ENCODE measurements at regions of chr1 and their contacts with region 1.

Region 1: GRCh38 chr1:211323156-211324063 is 3.2 kb upstream of the TRAF5 start:
- DNase-seq: peak; percentile 78
- H3K4me3 Mint-ChIP-seq: no peak overlapping the region
- H3K27ac Mint-ChIP-seq: peak overlapping the region; percentile 68
- H3K4me1 Mint-ChIP-seq: peaks cover 55% of the 10 kb centered on the region
- H3K27me3 Mint-ChIP-seq: no peaks in the 10 kb centered on the region

Region 2: DNA sequence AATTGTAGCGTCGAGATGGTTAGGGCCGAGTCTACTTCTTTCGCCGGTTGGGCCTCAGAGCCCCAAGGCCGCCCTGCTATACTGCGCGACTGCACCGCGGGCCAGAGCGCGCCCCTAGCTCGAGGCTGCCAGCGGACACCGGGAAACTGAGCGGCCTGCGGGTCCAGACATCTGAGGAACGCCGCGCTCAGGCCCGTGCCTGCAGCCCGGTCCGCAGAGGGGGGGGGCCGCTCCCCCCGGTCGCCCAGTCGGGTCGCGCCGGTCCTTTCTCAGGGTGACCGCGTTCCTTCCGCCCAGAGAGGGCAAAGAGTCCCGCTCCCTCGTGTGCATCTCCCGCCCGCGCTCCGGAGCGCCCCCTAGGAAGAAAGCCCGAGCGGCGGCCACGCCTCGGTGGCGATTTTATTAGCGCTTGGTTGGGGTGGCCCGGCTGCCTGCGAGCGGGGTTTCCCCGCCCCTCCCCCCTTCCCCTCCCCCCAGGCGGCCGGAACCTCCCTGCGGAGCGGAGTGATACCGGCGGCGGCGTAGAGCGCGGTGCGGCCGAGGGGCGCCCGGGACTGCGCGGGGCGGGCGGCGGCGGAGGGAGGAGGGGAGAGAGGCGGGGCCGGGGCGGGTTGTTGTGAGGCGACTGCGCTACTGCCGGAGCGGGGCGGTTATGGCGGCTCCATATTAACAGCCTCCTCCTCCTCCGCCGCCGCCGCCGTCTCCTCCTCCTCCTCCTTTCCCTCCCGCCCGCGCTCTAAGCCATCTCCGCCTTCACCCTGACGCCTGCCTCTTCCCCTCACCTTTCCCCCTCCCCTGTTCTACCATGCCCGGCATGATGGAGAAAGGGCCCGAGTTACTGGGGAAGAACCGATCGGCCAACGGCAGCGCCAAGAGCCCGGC is 64.4 kb before region 1 on chr1 and contains the start of gene RCOR3:
- CTCF ChIA-PET with region 1: interaction called, 4 read pairs
- POLR2A ChIA-PET with region 1: interaction called, 4 read pairs
- intact Hi-C with region 1: loop called (anchors 1 kb)
- DNase-seq: peak; percentile 95
- H3K4me3 Mint-ChIP-seq: peak within 1 kb of the TSS; percentile 83
- H3K27ac Mint-ChIP-seq: peak within 1 kb of the TSS; percentile 93
- H3K4me1 Mint-ChIP-seq: peaks cover 16% of the 10 kb centered on the region
- H3K27me3 Mint-ChIP-seq: no peaks in the 10 kb centered on the region
- total RNA-seq, gene RCOR3: 30.2 to 32.7 TPM

Region 3: GRCh38 chr1:211335522-211336157 is 12.2 kb after region 1 on chr1:
- CTCF ChIA-PET with region 1: interaction called, 36 read pairs
- POLR2A ChIA-PET with region 1: interaction called, 6 read pairs
- intact Hi-C with region 1: loop called (anchors 1 kb)
- DNase-seq: peak; percentile 38
- H3K4me3 Mint-ChIP-seq: peak overlapping the region; percentile 48
- H3K27ac Mint-ChIP-seq: peak overlapping the region; percentile 86
- H3K4me1 Mint-ChIP-seq: peaks cover 82% of the 10 kb centered on the region
- H3K27me3 Mint-ChIP-seq: no peaks in the 10 kb centered on the region

Region 4: DNA sequence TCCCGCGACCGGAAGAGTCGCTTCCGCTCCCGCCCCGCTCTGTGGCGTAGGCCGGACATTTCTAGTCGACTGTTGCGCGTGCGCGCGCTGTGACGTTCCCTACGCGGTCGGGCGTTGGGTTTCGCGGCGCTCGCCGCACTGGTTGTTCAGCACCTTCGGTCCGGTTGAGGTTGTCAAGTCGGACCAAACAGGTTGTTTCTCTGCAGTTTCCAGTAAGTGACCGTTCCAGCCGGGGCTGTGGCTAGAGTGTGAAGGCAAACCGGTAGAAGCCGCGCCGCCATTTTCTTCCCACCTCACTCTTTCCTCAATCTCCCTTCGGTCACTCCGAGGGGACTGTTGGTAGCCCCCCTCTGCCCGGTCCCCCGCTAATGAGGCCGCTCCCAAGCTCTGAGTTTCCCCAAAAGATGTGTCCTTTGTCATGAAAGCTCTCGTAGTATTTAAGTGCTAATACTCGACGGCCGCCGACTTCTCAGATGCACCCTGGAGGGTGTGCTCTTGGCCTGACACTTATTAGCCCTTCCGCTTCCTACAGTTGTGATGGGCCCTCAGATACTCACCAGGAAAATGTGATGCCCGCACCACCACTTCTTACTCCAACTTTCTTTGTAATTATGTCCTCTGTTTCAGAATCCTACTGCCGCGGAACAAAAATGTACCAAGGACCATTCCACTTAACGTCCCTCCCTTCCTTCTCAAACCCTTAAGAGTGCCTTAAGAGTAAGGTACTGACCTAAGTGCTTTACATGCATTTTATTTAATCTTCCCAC is 59.5 kb after region 1 on chr1:
- CTCF ChIA-PET with region 1: interaction called, 9 read pairs
- POLR2A ChIA-PET with region 1: interaction called, 4 read pairs
- intact Hi-C with region 1: loop called (anchors 1 kb)
- DNase-seq: peak; percentile 88
- H3K4me3 Mint-ChIP-seq: peak overlapping the region; percentile 78
- H3K27ac Mint-ChIP-seq: peak overlapping the region; percentile 88
- H3K4me1 Mint-ChIP-seq: peaks cover 42% of the 10 kb centered on the region
- H3K27me3 Mint-ChIP-seq: no peaks in the 10 kb centered on the region

Region 5: GRCh38 chr1:211469938-211470529 is 146.6 kb after region 1 on chr1:
- CTCF ChIA-PET with region 1: interaction called, 19 read pairs
- POLR2A ChIA-PET with region 1: no interaction called
- intact Hi-C with region 1: no loop called
- DNase-seq: peak; percentile 57
- H3K4me3 Mint-ChIP-seq: no peak overlapping the region
- H3K27ac Mint-ChIP-seq: no peak overlapping the region
- H3K4me1 Mint-ChIP-seq: no peaks in the 10 kb centered on the region
- H3K27me3 Mint-ChIP-seq: no peaks in the 10 kb centered on the region

Region 6: GRCh38 chr1:211514030-211514754 is 190.8 kb after region 1 on chr1:
- CTCF ChIA-PET with region 1: interaction called, 77 read pairs
- POLR2A ChIA-PET with region 1: interaction called, 3 read pairs
- intact Hi-C with region 1: loop called (anchors 1 kb)
- DNase-seq: peak; percentile 88
- H3K4me3 Mint-ChIP-seq: peak overlapping the region; percentile 56
- H3K27ac Mint-ChIP-seq: no peak overlapping the region
- H3K4me1 Mint-ChIP-seq: peaks cover 23% of the 10 kb centered on the region
- H3K27me3 Mint-ChIP-seq: no peaks in the 10 kb centered on the region

Region 7: GRCh38 chr1:211551628-211552460 is 228.4 kb after region 1 on chr1:
- CTCF ChIA-PET with region 1: no interaction called
- POLR2A ChIA-PET with region 1: no interaction called
- intact Hi-C with region 1: no loop called
- DNase-seq: no peak
- H3K4me3 Mint-ChIP-seq: no peak overlapping the region
- H3K27ac Mint-ChIP-seq: no peak overlapping the region
- H3K4me1 Mint-ChIP-seq: no peaks in the 10 kb centered on the region
- H3K27me3 Mint-ChIP-seq: no peaks in the 10 kb centered on the region

Measured in activated CD4-positive, alpha-beta memory T cell treated with anti-CD3 and anti-CD28 coated beads for 36 hours (primary cell).